HepG2 (cell line): ENCODE measurements at regions of chr5 and their contacts with region 1.

Region 1: DNA sequence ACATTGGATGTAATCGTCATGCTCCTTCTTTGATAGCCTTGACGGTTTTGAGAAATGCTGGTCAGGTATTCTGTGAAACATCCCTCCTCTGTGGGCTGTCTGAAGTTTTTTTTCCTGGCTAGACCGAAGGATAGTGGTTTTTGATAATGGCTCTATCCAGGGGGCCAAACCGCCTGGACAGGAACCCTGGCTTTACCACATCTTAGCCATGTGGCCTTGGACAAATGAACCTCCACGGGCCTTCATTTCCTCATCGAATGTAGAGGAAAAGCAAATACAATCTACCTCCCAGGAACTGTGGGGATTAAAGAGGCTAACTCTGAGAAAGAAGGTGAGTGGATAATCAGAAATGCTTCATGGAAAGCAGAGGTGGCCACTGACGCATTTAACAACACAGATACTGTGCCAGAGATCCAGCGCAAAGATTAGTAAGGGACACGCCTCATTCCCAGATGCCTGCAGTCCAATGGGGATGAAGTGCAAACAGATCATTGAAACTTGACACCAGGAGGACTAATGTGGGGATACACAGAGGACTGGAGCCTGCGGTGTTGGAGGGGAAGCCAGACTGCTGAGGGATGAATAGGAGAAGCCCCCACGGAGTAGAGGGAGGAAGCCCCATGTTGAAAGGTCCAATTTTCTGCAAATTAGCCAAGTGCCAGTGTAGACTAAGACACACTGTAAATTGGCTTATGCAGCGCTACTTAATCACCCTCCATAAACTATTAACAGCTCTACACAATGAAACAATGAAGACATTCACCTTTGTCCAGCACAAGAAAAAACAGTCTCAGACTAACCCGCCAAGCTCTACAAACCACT is 41.6 kb downstream of the MYO10 start:
- DNase-seq: peak; percentile 75
- ATAC-seq: peak; percentile 99
- H3K4me3 ChIP-seq: no peak overlapping the region
- H3K27ac ChIP-seq: no peak overlapping the region
- H3K4me1 ChIP-seq: peaks cover 20% of the 10 kb centered on the region
- H3K27me3 ChIP-seq: peaks cover 0 to 5% of the 10 kb centered on the region in 2 experiments; a peak in 1 of 5 replicates
- CTCF ChIP-seq: no peak
- EP300 ChIP-seq: no peak
- POLR2A ChIP-seq: no peak
- RAD21 ChIP-seq: no peak

Region 2: GRCh38 chr5:16869821-16870796 is 24.3 kb before region 1 on chr5:
- CTCF ChIA-PET with region 1: no interaction called
- POLR2A ChIA-PET with region 1: no interaction called
- in situ Hi-C with region 1: no loop called
- intact Hi-C with region 1: no loop called
- DNase-seq: no peak
- ATAC-seq: no peak
- H3K4me3 ChIP-seq: no peak overlapping the region
- H3K27ac ChIP-seq: no peak overlapping the region
- H3K4me1 ChIP-seq: no peaks in the 10 kb centered on the region
- H3K27me3 ChIP-seq: no peaks in the 10 kb centered on the region
- CTCF ChIP-seq: no peak
- EP300 ChIP-seq: no peak
- POLR2A ChIP-seq: no peak
- RAD21 ChIP-seq: no peak

Region 3: GRCh38 chr5:16881251-16881650 is 13.2 kb before region 1 on chr5:
- CTCF ChIA-PET with region 1: no interaction called
- POLR2A ChIA-PET with region 1: no interaction called
- in situ Hi-C with region 1: no loop called
- intact Hi-C with region 1: loop called (anchors 2 kb)
- DNase-seq: peak; percentile 84
- ATAC-seq: peak; percentile 98
- H3K4me3 ChIP-seq: no peak overlapping the region
- H3K27ac ChIP-seq: no peak overlapping the region
- H3K4me1 ChIP-seq: peaks cover 18% of the 10 kb centered on the region
- H3K27me3 ChIP-seq: peaks cover 0 to 25% of the 10 kb centered on the region in 2 experiments; a peak in 2 of 5 replicates
- CTCF ChIP-seq: no peak
- EP300 ChIP-seq: peak in 1 of 2 experiments; percentile 57; a peak in 1 of 4 replicates
- POLR2A ChIP-seq: no peak
- RAD21 ChIP-seq: no peak